Naive thymus-derived CD4-positive, alpha-beta T cell (primary cell): ENCODE measurements at regions of chr5 and their contacts with region 1.

Region 1: GRCh38 chr5:150350524-150351344 is 6.8 kb upstream of the TCOF1 start:
- DNase-seq: peak in 6 of 9 donors; percentile 18 to 55 (median 31)
- ATAC-seq: peak; percentile 88
- H3K4me3 ChIP-seq: no peak overlapping the region
- H3K4me3 Mint-ChIP-seq: peak overlapping the region in 3 of 10 donors; percentile 8 to 68 (median 26)
- H3K27ac ChIP-seq: peak overlapping the region; percentile 3
- H3K27ac Mint-ChIP-seq: peak overlapping the region; percentile 17 to 88 (median 78)
- H3K4me1 ChIP-seq: peaks cover 0 to 7% of the 10 kb centered on the region in 2 donors
- H3K4me1 Mint-ChIP-seq: peaks cover 10 to 14% (median 13%) of the 10 kb centered on the region in 7 donors
- H3K27me3 ChIP-seq: no peaks in the 10 kb centered on the region
- H3K27me3 Mint-ChIP-seq: peaks cover 0 to 3% (median 0%) of the 10 kb centered on the region in 5 donors

Region 2: DNA sequence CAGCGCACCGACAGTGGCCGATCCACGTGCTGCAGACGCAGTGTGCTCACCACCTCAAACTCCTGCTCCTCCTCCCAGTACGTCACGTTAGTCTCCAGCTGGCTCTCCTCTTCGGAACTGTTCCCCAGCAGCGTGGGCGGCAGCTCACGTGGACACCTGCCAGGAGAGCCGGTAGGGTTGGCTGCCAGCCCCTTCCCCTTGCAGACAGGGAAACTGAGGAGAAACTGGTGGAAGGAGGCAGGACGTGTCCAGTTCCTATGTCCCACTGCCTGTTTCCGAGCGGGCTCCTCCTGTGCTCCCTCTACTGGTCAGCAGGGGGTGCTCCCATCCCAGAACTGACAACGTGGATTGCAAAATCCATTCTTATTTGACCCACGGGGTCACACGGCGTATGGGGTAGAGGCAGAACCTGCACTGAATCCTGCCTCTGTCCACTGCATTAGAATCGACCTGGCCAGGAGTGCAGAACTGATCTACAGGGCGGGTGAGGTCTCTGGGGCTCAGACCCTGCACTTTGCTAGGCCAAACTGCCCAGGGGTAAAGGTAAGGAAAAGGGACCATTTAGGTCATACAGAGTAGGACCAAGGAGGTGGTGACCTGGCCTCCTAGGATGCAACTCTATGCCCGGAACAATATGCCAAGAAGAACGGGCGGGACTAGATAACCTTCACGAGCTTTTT is 220.8 kb before region 1 on chr5:
- CTCF ChIA-PET with region 1: no interaction called
- POLR2A ChIA-PET with region 1: no interaction called
- intact Hi-C with region 1: loop called in 1 of 2 experiments (anchors 1 kb)
- DNase-seq: peak in 7 of 9 donors; percentile 6 to 55 (median 19)
- ATAC-seq: peak; percentile 75
- H3K4me3 ChIP-seq: no peak overlapping the region
- H3K4me3 Mint-ChIP-seq: no peak overlapping the region
- H3K27ac ChIP-seq: no peak overlapping the region
- H3K27ac Mint-ChIP-seq: peak overlapping the region in 1 of 9 donors; percentile 55
- H3K4me1 ChIP-seq: no peaks in the 10 kb centered on the region
- H3K4me1 Mint-ChIP-seq: peaks cover 0 to 10% (median 0%) of the 10 kb centered on the region in 7 donors
- H3K27me3 ChIP-seq: no peaks in the 10 kb centered on the region
- H3K27me3 Mint-ChIP-seq: peaks cover 0 to 3% (median 0%) of the 10 kb centered on the region in 5 donors

Region 3: GRCh38 chr5:150161242-150162141 is 189.2 kb before region 1 on chr5:
- CTCF ChIA-PET with region 1: interaction called, 3 read pairs
- POLR2A ChIA-PET with region 1: no interaction called
- intact Hi-C with region 1: loop called (anchors 1 kb)
- DNase-seq: peak; percentile 35 to 80 (median 60)
- ATAC-seq: peak; percentile 82
- H3K4me3 ChIP-seq: no peak overlapping the region
- H3K4me3 Mint-ChIP-seq: no peak overlapping the region
- H3K27ac ChIP-seq: no peak overlapping the region
- H3K27ac Mint-ChIP-seq: peak overlapping the region in 1 of 9 donors; percentile 16
- H3K4me1 ChIP-seq: no peaks in the 10 kb centered on the region
- H3K4me1 Mint-ChIP-seq: peaks cover 0 to 4% (median under 1%) of the 10 kb centered on the region in 7 donors
- H3K27me3 ChIP-seq: no peaks in the 10 kb centered on the region
- H3K27me3 Mint-ChIP-seq: peaks cover 19 to 32% (median 30%) of the 10 kb centered on the region in 5 donors

Region 4: GRCh38 chr5:150272526-150272925 is 78.2 kb before region 1 on chr5:
- CTCF ChIA-PET with region 1: interaction called, 3 read pairs
- POLR2A ChIA-PET with region 1: no interaction called
- intact Hi-C with region 1: loop called in 1 of 2 experiments (anchors 2 kb)
- DNase-seq: no peak
- ATAC-seq: no peak
- H3K4me3 ChIP-seq: no peak overlapping the region
- H3K4me3 Mint-ChIP-seq: no peak overlapping the region
- H3K27ac ChIP-seq: no peak overlapping the region
- H3K27ac Mint-ChIP-seq: no peak overlapping the region
- H3K4me1 ChIP-seq: no peaks in the 10 kb centered on the region
- H3K4me1 Mint-ChIP-seq: no peaks in the 10 kb centered on the region
- H3K27me3 ChIP-seq: no peaks in the 10 kb centered on the region
- H3K27me3 Mint-ChIP-seq: peaks cover 0 to 14% (median 0%) of the 10 kb centered on the region in 5 donors